Activated CD8-positive, alpha-beta T cell treated with anti-CD3 and anti-CD28 coated beads, Interleukin-2, amount 10 ng/mL, durations not matched to agents 7 days and 5 days (primary cell): ENCODE measurements at regions of chrX and their contacts with region 1.

Region 1: GRCh38 chrX:110002300-110003166 is at the start of gene TMEM164:
- DNase-seq: peak; percentile 88
- ATAC-seq: peak; percentile 83
- H3K4me3 Mint-ChIP-seq: peak within 1 kb of the TSS; percentile 81
- H3K27ac Mint-ChIP-seq: peak within 1 kb of the TSS; percentile 91
- H3K4me1 Mint-ChIP-seq: peaks cover 42% of the 10 kb centered on the region
- H3K27me3 Mint-ChIP-seq: no peaks in the 10 kb centered on the region
- total RNA-seq, gene TMEM164: 17.5 to 24.1 TPM

Region 2: DNA sequence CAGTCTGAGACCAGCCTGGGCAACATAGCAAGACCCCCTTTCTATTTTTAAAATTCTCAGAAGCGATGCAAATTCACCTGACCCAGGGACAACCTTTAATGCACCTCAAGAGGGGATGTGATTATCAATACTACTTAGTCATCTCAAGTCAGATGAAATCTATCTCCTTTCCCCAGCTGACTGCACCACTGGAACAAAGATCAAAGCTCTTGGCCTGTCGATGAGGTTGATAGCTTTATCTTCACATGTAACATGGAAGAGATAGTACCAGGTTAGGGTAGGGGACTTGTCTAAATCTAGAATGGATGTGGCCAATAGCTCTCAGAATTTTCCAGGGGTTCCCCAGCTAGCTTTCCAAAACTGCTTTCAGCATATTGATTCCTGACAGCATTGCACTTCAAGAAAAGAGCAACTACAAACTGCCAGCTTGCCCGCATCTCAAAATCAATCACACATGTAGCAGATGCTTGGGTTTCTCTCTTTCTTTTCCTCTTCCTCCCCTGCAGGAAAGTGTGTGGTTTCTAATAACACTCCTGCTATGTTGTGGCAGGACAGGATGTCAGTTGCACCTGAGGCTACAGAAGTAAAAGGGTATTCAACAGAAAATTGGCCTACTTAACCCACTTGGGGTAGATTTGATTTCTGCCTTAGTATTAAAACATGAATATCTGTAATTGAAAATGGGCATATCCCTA is 11.8 kb before region 1 on chrX:
- CTCF ChIA-PET with region 1: interaction called, 3 read pairs
- POLR2A ChIA-PET with region 1: interaction called, 14 read pairs
- DNase-seq: no peak
- ATAC-seq: no peak
- H3K4me3 Mint-ChIP-seq: peak overlapping the region; percentile 23
- H3K27ac Mint-ChIP-seq: peak overlapping the region; percentile 65
- H3K4me1 Mint-ChIP-seq: peaks cover 43% of the 10 kb centered on the region
- H3K27me3 Mint-ChIP-seq: no peaks in the 10 kb centered on the region